GM12878 (cell line): ENCODE measurements at regions of chrX and their contacts with region 1.

Region 1: GRCh38 chrX:129754056-129755024 is 15.6 kb downstream of the XPNPEP2 start:
- DNase-seq: no peak
- ATAC-seq: no peak
- H3K4me3 ChIP-seq: no peak overlapping the region
- H3K27ac ChIP-seq: no peak overlapping the region
- H3K4me1 ChIP-seq: peaks cover 19% of the 10 kb centered on the region
- H3K27me3 ChIP-seq: no peaks in the 10 kb centered on the region
- CTCF ChIP-seq: peak; percentile 31 to 60 (median 56); a peak in 5 of 6 replicates
- EP300 ChIP-seq: no peak
- POLR2A ChIP-seq: no peak
- RAD21 ChIP-seq: peak; percentile 59

Region 2: GRCh38 chrX:129706400-129707072 is 47.8 kb before region 1 on chrX:
- CTCF ChIA-PET with region 1: no interaction called
- POLR2A ChIA-PET with region 1: no interaction called
- RAD21 ChIA-PET with region 1: no interaction called
- SMC1A ChIA-PET with region 1: no interaction called
- in situ Hi-C with region 1: no loop called
- intact Hi-C with region 1: no loop called
- DNase-seq: no peak
- ATAC-seq: no peak
- H3K4me3 ChIP-seq: no peak overlapping the region
- H3K27ac ChIP-seq: no peak overlapping the region
- H3K4me1 ChIP-seq: no peaks in the 10 kb centered on the region
- H3K27me3 ChIP-seq: no peaks in the 10 kb centered on the region
- CTCF ChIP-seq: no peak
- EP300 ChIP-seq: no peak
- POLR2A ChIP-seq: no peak
- RAD21 ChIP-seq: no peak

Region 3: DNA sequence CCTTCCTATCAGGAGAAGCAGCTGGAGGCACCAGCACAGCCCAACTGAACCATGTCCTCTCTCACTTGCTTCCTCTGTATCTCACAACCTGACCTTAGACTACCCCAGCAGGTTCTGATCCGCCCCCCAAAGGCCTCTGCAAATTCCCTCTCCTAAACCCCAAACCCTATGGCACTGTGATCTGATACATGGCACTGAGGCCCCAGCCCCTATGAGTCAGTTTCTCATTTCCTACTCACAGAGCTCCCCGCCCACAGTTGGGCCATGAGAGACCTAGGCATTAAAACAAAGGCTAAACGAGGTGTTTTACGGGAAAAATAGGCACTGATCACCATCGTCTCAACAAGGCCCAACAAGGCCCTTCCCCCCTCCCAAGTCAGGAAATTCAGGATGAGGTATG is 44.5 kb after region 1 on chrX:
- CTCF ChIA-PET with region 1: interaction called, 7 read pairs
- POLR2A ChIA-PET with region 1: no interaction called
- RAD21 ChIA-PET with region 1: interaction called, 11 read pairs
- SMC1A ChIA-PET with region 1: interaction called, 3 read pairs
- in situ Hi-C with region 1: no loop called
- intact Hi-C with region 1: no loop called
- DNase-seq: no peak
- ATAC-seq: peak; percentile 38; the same call in 2 of the 3 replicates
- H3K4me3 ChIP-seq: no peak overlapping the region
- H3K27ac ChIP-seq: no peak overlapping the region
- H3K4me1 ChIP-seq: no peaks in the 10 kb centered on the region
- H3K27me3 ChIP-seq: no peaks in the 10 kb centered on the region
- CTCF ChIP-seq: no peak
- EP300 ChIP-seq: no peak
- POLR2A ChIP-seq: no peak
- RAD21 ChIP-seq: no peak